GM23248 (cell line): ENCODE measurements at regions of chr17 and their contacts with region 1.

Region 1: GRCh38 chr17:11900041-11900476 is 97.2 kb downstream of the ZNF18 start:
- DNase-seq: no peak
- H3K4me3 ChIP-seq: no peak overlapping the region
- H3K27ac ChIP-seq: no peak overlapping the region
- H3K4me1 ChIP-seq: no peaks in the 10 kb centered on the region
- H3K27me3 ChIP-seq: no peaks in the 10 kb centered on the region

Region 2: GRCh38 chr17:10875979-10876555 is 1024.0 kb before region 1 on chr17:
- in situ Hi-C with region 1: loop called (anchors 25 kb)
- DNase-seq: peak; percentile 46
- H3K4me3 ChIP-seq: no peak overlapping the region
- H3K27ac ChIP-seq: no peak overlapping the region
- H3K4me1 ChIP-seq: no peaks in the 10 kb centered on the region
- H3K27me3 ChIP-seq: no peaks in the 10 kb centered on the region

Region 3: GRCh38 chr17:11779892-11780291 is 120.2 kb before region 1 on chr17:
- in situ Hi-C with region 1: no loop called
- DNase-seq: no peak
- H3K4me3 ChIP-seq: no peak overlapping the region
- H3K27ac ChIP-seq: no peak overlapping the region
- H3K4me1 ChIP-seq: no peaks in the 10 kb centered on the region
- H3K27me3 ChIP-seq: no peaks in the 10 kb centered on the region

Region 4: DNA sequence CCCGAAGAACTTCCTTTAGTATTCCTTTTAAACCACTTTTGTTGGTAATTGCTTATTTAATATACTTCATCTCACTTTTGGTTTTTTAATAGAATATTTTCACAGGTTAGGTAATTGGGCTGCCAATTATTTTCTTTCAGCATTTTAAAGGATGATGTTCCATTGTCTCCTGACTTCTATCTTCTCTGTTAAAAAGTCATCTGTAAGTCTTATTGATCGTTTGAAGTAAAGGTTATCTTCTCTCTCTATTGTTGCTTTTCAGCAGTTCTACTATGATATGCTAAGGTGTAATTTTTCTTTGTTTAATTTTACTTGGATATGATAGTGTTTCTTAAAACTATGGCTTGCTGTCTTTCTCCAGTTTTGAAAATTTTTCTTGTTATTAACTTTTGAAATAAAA is 428.1 kb after region 1 on chr17:
- in situ Hi-C with region 1: no loop called
- DNase-seq: no peak
- H3K4me3 ChIP-seq: no peak overlapping the region
- H3K27ac ChIP-seq: no peak overlapping the region
- H3K4me1 ChIP-seq: no peaks in the 10 kb centered on the region
- H3K27me3 ChIP-seq: no peaks in the 10 kb centered on the region